Esophagus muscularis mucosa (tissue), 4 donors: ENCODE measurements at regions of chr12 and their contacts with region 1.

Region 1: DNA sequence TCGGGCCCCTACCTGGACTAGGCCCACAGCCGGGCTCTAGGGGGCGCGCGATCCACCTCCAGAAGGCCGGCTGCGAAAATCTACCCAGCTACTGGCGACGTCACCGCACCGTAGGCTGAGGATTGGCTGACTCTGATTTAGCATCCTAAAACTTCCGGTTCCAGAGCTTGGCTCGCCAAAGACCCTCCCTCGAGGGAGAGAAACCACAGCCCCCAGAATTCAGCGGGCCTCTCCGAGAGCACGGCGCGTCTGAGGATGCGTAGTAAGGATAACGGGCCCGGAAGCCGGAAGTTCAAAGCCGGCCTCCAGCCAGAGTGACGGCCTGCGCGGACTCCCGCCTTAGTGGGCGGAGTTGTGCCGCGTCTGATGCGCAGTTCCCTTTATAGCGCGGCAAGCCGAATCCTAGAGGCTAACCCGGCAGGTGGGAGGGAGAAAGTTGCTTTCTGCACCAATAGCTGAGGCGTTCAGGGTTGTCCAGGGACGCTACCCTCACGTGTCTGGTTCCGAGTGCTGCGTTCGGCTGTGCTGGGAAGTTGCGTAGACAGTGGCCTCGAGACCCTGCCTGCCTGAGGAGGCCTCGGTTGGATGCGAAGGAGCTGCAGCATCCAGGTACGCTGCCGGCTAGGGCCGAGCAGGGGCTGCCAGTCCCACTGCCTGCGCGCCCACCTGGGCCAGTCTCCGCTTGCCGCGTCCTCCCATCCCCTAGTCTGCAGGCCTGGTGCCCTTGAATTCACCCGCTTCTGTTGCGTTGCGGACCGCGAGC is at the start of gene COX14:
- DNase-seq: peak; percentile 99
- H3K4me3 ChIP-seq: peak within 1 kb of the TSS; percentile 82 to 97 (median 85)
- H3K27ac ChIP-seq: peak within 1 kb of the TSS; percentile 95 to 98 (median 97)
- H3K4me1 ChIP-seq: peaks cover 50 to 69% (median 57%) of the 10 kb centered on the region in 4 donors
- H3K27me3 ChIP-seq: no peaks in the 10 kb centered on the region
- CTCF ChIP-seq: peak; percentile 85 to 93 (median 87)
- EP300 ChIP-seq: peak; percentile 62
- POLR2A ChIP-seq: peak; percentile 95
- total RNA-seq, gene COX14: 52.8 to 105 (median 87.6) TPM

Region 2: DNA sequence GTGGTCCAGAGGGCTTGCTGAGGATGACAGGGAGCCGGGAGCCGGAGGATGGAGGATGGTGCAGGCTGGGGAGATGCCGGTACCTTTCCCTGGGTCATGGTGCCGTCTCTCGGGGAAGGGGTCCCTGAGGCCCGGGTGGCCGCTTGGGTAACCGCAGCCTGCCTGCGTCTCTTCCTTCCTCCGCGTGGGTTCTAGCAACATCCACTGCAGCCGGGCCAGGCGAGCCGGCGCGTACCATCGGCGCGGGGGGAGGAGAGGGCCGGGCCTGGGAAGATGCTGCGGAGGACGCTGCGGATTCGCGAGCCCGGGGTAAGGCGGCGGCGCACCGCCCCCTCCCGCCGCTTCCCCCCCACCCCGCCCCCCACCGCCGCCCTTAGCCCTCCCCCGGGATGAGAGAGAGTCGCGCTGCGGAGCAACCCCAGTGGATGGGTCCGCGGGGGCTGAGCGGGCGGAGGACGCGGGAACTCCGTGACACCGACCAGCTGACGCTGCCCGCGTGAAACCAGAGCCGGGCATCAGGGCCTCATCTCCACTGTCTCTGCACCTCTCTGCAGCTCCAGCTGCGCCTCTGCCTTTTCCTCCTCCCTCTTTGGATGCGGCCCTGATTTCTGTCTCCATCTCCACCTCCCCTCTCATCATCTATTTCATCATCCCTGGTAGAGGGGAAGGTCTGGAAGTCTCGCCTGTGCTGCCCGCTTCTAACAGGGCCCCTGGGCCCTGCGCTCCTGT is 208.0 kb before region 1 on chr12 and contains the start of gene FAIM2:
- intact Hi-C with region 1: no loop called
- DNase-seq: no peak
- H3K4me3 ChIP-seq: peak within 1 kb of the TSS; percentile 55 to 67 (median 58)
- H3K27ac ChIP-seq: peak within 1 kb of the TSS; percentile 56 to 73 (median 66)
- H3K4me1 ChIP-seq: peaks cover 8 to 19% (median 14%) of the 10 kb centered on the region in 4 donors
- H3K27me3 ChIP-seq: peaks cover 0 to 13% (median 0%) of the 10 kb centered on the region in 4 donors
- CTCF ChIP-seq: no peak
- EP300 ChIP-seq: no peak
- POLR2A ChIP-seq: no peak
- total RNA-seq, gene FAIM2: 4.1 to 10.3 (median 7.4) TPM

Region 3: GRCh38 chr12:50167041-50167828 is 55.4 kb after region 1 on chr12 and contains the start of gene CERS5:
- intact Hi-C with region 1: loop called (anchors 5 kb)
- DNase-seq: peak; percentile 100
- H3K4me3 ChIP-seq: peak within 1 kb of the TSS; percentile 93 to 99 (median 97)
- H3K27ac ChIP-seq: peak within 1 kb of the TSS; percentile 94 to 98 (median 96)
- H3K4me1 ChIP-seq: peaks cover 10 to 39% (median 36%) of the 10 kb centered on the region in 4 donors
- H3K27me3 ChIP-seq: no peaks in the 10 kb centered on the region
- CTCF ChIP-seq: peak in 2 of 3 experiments; percentile 28 to 33
- EP300 ChIP-seq: no peak
- POLR2A ChIP-seq: peak; percentile 38
- total RNA-seq, gene CERS5: 23.0 to 33.6 (median 27.5) TPM